Right cardiac atrium (tissue), 5 donors: ENCODE measurements at regions of chr18 and their contacts with region 1.

Region 1: GRCh38 chr18:77207540-77207939 is 42.1 kb upstream of the GALR1 start:
- DNase-seq: peak; percentile 70 to 89 (median 88)
- ATAC-seq: peak; percentile 48 to 76
- H3K4me3 ChIP-seq: no peak overlapping the region
- H3K27ac ChIP-seq: no peak overlapping the region
- H3K4me1 ChIP-seq: no peaks in the 10 kb centered on the region
- H3K27me3 ChIP-seq: no peaks in the 10 kb centered on the region

Region 2: GRCh38 chr18:77000527-77000926 is 207.0 kb before region 1 on chr18:
- intact Hi-C with region 1: loop called in 3 of 4 experiments (anchors 5 kb)
- DNase-seq: peak; percentile 63 to 83 (median 81)
- ATAC-seq: no peak
- H3K4me3 ChIP-seq: peak overlapping the region; percentile 48
- H3K27ac ChIP-seq: no peak overlapping the region
- H3K4me1 ChIP-seq: no peaks in the 10 kb centered on the region
- H3K27me3 ChIP-seq: no peaks in the 10 kb centered on the region

Region 3: GRCh38 chr18:77054606-77055428 is 152.7 kb before region 1 on chr18:
- intact Hi-C with region 1: loop called in 1 of 4 experiments (anchors 10 kb)
- DNase-seq: peak; percentile 85 to 95 (median 93)
- ATAC-seq: peak; percentile 85 to 87
- H3K4me3 ChIP-seq: no peak overlapping the region
- H3K27ac ChIP-seq: peak overlapping the region; percentile 29
- H3K4me1 ChIP-seq: peaks cover 2% of the 10 kb centered on the region
- H3K27me3 ChIP-seq: no peaks in the 10 kb centered on the region

Region 4: DNA sequence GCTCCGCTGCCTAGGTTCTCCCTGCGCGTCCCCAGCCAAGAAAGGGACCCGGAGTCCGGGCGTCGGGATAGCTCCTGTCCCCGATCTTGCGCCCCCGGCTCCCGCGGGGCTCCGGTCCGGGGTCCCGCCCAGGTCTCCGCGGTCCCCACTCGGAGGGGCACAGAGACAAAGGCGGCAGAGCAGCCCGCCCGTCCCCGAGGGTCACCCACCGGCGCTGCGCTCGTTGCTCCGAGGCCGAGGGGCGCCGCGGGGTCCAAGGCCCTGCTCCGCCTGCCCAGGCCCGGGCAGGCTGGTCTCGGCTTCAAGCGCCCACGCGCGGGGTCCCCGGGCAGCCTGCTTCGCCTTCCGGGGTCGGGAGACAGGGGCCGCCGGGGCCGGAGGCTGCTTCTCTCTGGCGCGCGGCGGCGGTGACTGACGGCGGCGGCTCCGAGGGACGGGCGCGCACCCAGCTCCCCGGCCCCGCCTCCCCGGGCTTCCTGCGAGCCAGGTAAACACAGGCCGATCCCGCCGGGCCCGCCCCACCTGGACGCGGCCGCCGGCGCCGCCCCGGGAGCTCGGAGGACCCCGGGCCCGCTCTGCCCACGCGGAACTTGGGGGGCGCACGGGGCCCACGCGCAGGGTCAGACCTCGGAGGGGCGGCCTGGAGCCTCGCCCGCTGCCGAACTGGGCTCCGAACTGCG is 75.0 kb before region 1 on chr18 and contains the start of gene MBP:
- intact Hi-C with region 1: loop called in 1 of 4 experiments (anchors 10 kb)
- DNase-seq: peak; percentile 61 to 83 (median 81)
- ATAC-seq: peak; percentile 49 to 59
- H3K4me3 ChIP-seq: peak within 1 kb of the TSS; percentile 56
- H3K27ac ChIP-seq: peak within 1 kb of the TSS; percentile 59
- H3K4me1 ChIP-seq: peaks cover 3% of the 10 kb centered on the region
- H3K27me3 ChIP-seq: no peaks in the 10 kb centered on the region
- total RNA-seq, gene MBP: 14.6 to 26.4 (median 19.6) TPM

Region 5: GRCh38 chr18:77147418-77147852 is 60.1 kb before region 1 on chr18:
- intact Hi-C with region 1: loop called in 1 of 4 experiments (anchors 10 kb)
- DNase-seq: no peak
- ATAC-seq: no peak
- H3K4me3 ChIP-seq: no peak overlapping the region
- H3K27ac ChIP-seq: no peak overlapping the region
- H3K4me1 ChIP-seq: no peaks in the 10 kb centered on the region
- H3K27me3 ChIP-seq: no peaks in the 10 kb centered on the region